Esophagus muscularis mucosa (tissue), 4 donors: ENCODE measurements at regions of chr13 and their contacts with region 1.

Region 1: GRCh38 chr13:49606747-49607648 is 21.3 kb upstream of the ARL11 start:
- DNase-seq: peak; percentile 95
- H3K4me3 ChIP-seq: peak overlapping the region; percentile 32 to 48 (median 38)
- H3K27ac ChIP-seq: peak overlapping the region in 1 of 4 donors; percentile 34
- H3K4me1 ChIP-seq: peaks cover 0 to 9% (median 0%) of the 10 kb centered on the region in 4 donors
- H3K27me3 ChIP-seq: no peaks in the 10 kb centered on the region
- CTCF ChIP-seq: peak; percentile 74 to 82 (median 76)
- EP300 ChIP-seq: no peak
- POLR2A ChIP-seq: no peak

Region 2: GRCh38 chr13:49300739-49301589 is 306.0 kb before region 1 on chr13:
- intact Hi-C with region 1: loop called (anchors 5 kb)
- DNase-seq: no peak
- H3K4me3 ChIP-seq: peak overlapping the region; percentile 29 to 51 (median 38)
- H3K27ac ChIP-seq: peak overlapping the region in 2 of 4 donors; percentile 31 to 50
- H3K4me1 ChIP-seq: peaks cover 22 to 56% (median 49%) of the 10 kb centered on the region in 4 donors
- H3K27me3 ChIP-seq: no peaks in the 10 kb centered on the region
- CTCF ChIP-seq: peak; percentile 86 to 94 (median 86)
- EP300 ChIP-seq: no peak
- POLR2A ChIP-seq: no peak

Region 3: GRCh38 chr13:49443704-49444523 is 163.1 kb before region 1 on chr13 and contains the starts of genes CAB39L and SETDB2:
- intact Hi-C with region 1: loop called (anchors 10 kb)
- DNase-seq: peak; percentile 100
- H3K4me3 ChIP-seq: peak within 1 kb of the TSS; percentile 79 to 91 (median 80)
- H3K27ac ChIP-seq: peak within 1 kb of the TSS; percentile 93 to 99 (median 96)
- H3K4me1 ChIP-seq: peaks cover 19 to 50% (median 46%) of the 10 kb centered on the region in 4 donors
- H3K27me3 ChIP-seq: no peaks in the 10 kb centered on the region
- CTCF ChIP-seq: peak; percentile 30 to 50 (median 41)
- EP300 ChIP-seq: no peak
- POLR2A ChIP-seq: peak; percentile 25
- total RNA-seq, gene CAB39L: 75.4 to 119 (median 81.8) TPM
- total RNA-seq, gene SETDB2: 8.4 to 13.3 (median 9.3) TPM

Region 4: DNA sequence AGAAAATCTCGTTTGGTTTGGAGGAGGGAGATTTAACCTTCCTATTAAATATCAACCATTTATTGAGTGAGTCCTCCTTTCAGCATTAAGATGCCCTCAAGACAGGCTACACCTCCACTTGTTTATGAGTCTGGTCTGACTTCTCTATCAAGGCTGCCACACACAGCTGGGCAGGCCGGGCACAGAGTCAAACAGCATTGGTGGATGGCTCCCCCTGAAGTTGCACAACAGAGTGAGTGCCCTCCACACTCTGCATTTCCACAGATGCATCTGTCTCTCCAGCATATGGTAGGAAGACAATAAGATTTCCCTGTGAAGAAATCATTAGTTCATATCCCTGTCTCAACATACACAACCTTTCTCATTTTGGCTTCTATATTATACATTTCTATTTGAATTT is 79.9 kb before region 1 on chr13:
- intact Hi-C with region 1: no loop called
- DNase-seq: no peak
- H3K4me3 ChIP-seq: no peak overlapping the region
- H3K27ac ChIP-seq: no peak overlapping the region
- H3K4me1 ChIP-seq: peaks cover 0 to 3% (median 0%) of the 10 kb centered on the region in 4 donors
- H3K27me3 ChIP-seq: no peaks in the 10 kb centered on the region
- CTCF ChIP-seq: no peak
- EP300 ChIP-seq: no peak
- POLR2A ChIP-seq: no peak